Calu3 (cell line): ENCODE measurements at regions of chr16 and their contacts with region 1.

Region 1: GRCh38 chr16:48156790-48157209 is 1.0 kb upstream of the ABCC12 start:
- DNase-seq: peak; percentile 94
- H3K4me3 Mint-ChIP-seq: no peak overlapping the region
- H3K27ac Mint-ChIP-seq: no peak overlapping the region
- H3K4me1 Mint-ChIP-seq: peaks cover 20% of the 10 kb centered on the region
- H3K27me3 Mint-ChIP-seq: no peaks in the 10 kb centered on the region
- CTCF ChIP-seq: peak; percentile 98

Region 2: GRCh38 chr16:46982335-46982734 is 1174.5 kb before region 1 on chr16:
- CTCF ChIA-PET with region 1: interaction called, 11 read pairs
- intact Hi-C with region 1: no loop called
- DNase-seq: no peak
- H3K4me3 Mint-ChIP-seq: no peak overlapping the region
- H3K27ac Mint-ChIP-seq: no peak overlapping the region
- H3K4me1 Mint-ChIP-seq: no peaks in the 10 kb centered on the region
- H3K27me3 Mint-ChIP-seq: no peaks in the 10 kb centered on the region
- CTCF ChIP-seq: no peak

Region 3: GRCh38 chr16:47018223-47018891 is 1138.4 kb before region 1 on chr16:
- CTCF ChIA-PET with region 1: no interaction called
- intact Hi-C with region 1: loop called (anchors 2 kb)
- DNase-seq: peak; percentile 72
- H3K4me3 Mint-ChIP-seq: no peak overlapping the region
- H3K27ac Mint-ChIP-seq: no peak overlapping the region
- H3K4me1 Mint-ChIP-seq: no peaks in the 10 kb centered on the region
- H3K27me3 Mint-ChIP-seq: no peaks in the 10 kb centered on the region
- CTCF ChIP-seq: peak; percentile 49

Region 4: GRCh38 chr16:47970291-47970931 is 186.4 kb before region 1 on chr16:
- CTCF ChIA-PET with region 1: no interaction called
- intact Hi-C with region 1: loop called (anchors 10 kb)
- DNase-seq: peak; percentile 6
- H3K4me3 Mint-ChIP-seq: no peak overlapping the region
- H3K27ac Mint-ChIP-seq: no peak overlapping the region
- H3K4me1 Mint-ChIP-seq: no peaks in the 10 kb centered on the region
- H3K27me3 Mint-ChIP-seq: peaks cover 63% of the 10 kb centered on the region
- CTCF ChIP-seq: no peak

Region 5: GRCh38 chr16:48054881-48055601 is 101.8 kb before region 1 on chr16:
- CTCF ChIA-PET with region 1: no interaction called
- intact Hi-C with region 1: loop called (anchors 10 kb)
- DNase-seq: peak; percentile 52
- H3K4me3 Mint-ChIP-seq: no peak overlapping the region
- H3K27ac Mint-ChIP-seq: no peak overlapping the region
- H3K4me1 Mint-ChIP-seq: no peaks in the 10 kb centered on the region
- H3K27me3 Mint-ChIP-seq: peaks cover 74% of the 10 kb centered on the region
- CTCF ChIP-seq: peak; percentile 81

Region 6: GRCh38 chr16:48126801-48127644 is 29.8 kb before region 1 on chr16:
- CTCF ChIA-PET with region 1: interaction called, 4 read pairs
- intact Hi-C with region 1: loop called (anchors 2 kb)
- DNase-seq: peak; percentile 26
- H3K4me3 Mint-ChIP-seq: no peak overlapping the region
- H3K27ac Mint-ChIP-seq: peak overlapping the region; percentile 19
- H3K4me1 Mint-ChIP-seq: peaks cover 19% of the 10 kb centered on the region
- H3K27me3 Mint-ChIP-seq: peaks cover 29% of the 10 kb centered on the region
- CTCF ChIP-seq: no peak